ENCODE measurements at regions of chr6 and their contacts with region 1.

Region 1: DNA sequence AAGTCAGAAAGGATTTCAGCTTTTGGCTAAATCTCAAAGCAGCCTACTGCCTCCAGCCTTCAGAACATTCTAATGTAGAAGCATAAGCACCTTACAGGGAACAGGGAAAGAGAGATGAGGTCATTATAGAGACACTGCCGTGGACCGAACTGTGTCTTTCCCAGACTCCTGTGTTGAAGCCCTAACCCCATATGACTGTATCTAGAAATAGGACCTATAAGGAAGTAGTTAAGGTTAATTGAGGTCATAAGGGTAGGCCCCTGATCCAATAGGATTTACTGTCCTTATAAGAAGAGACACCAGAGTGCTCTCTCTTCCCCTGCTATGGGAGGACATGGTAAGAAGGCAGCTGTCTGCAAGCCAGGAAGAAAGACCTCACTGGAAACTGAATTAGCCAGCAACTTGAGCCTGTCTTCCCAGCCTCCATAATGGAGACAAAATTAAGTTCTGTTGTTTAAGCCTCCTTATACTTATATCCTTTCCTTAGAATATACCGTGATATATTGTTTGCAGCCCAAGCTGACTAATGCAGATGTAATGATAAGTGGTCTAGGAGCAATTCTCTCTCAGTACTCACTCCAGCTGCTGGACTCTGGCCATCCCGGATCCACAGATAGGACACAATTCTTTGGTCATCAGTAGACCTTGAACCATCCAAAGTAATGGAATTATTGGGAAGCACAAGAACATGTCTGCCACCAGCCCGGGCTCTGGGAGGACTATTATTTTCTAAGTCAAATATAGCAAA is 71.4 kb downstream of the ALDH5A1 start:
- DNase-seq: no peak
- ATAC-seq: no peak
- H3K4me3 ChIP-seq: no peak overlapping the region
- H3K4me3 Mint-ChIP-seq: no peak overlapping the region
- H3K27ac ChIP-seq: no peak overlapping the region
- H3K27ac Mint-ChIP-seq: no peak overlapping the region
- H3K4me1 ChIP-seq: no peaks in the 10 kb centered on the region
- H3K4me1 Mint-ChIP-seq: peaks cover 0 to 5% (median 0%) of the 10 kb centered on the region in 3 donors
- H3K27me3 ChIP-seq: peaks cover 0 to 10% of the 10 kb centered on the region in 2 experiments
- H3K27me3 Mint-ChIP-seq: peaks cover 0 to 4% of the 10 kb centered on the region in 2 donors

Region 2: DNA sequence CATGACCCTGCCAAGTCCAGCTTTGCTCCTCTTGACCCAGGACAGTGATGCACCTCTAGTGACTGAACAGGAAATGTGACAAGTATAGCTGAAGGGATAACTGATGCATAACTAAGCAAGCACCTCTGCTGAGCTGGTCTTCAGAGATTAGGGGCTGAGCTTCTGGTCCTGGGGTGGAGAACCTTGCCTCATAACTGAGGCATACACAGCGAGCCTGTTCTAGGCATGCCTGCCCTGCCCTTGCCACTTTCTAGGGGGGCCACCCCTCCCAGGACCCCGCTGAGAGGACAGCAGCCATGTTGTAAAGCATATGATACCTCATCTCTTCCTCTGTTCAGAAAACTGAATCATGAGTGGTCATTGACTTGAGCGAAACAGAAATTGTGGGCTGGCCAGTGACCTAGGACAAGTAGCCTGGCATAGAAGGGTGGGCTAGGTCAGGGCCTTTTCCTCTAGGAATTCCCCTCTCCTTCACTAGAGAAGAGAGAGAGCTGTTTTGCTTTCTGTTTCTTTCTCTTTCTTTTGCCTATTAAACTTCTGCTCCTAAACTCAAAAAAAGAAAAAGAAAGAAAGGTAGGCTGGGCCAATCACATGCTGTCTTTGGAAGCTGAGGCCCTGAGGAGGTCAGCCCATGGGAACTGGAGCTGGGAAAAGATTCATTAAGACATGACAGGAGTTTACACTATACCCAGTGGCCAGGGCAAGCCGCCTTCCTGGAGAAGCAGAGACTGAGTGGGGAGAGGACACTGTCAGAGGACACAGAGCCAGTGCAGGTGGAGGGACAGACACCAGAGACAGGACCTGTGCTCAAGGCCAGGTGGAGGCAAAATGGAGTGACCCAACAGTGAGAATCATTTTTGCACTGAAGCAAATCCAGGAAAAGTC is 48.3 kb before region 1 on chr6:
- CTCF ChIA-PET with region 1: interaction called in 1 of 2 experiments, 10 read pairs
- POLR2A ChIA-PET with region 1: no interaction called
- DNase-seq: no peak
- ATAC-seq: no peak
- H3K4me3 ChIP-seq: no peak overlapping the region
- H3K4me3 Mint-ChIP-seq: no peak overlapping the region
- H3K27ac ChIP-seq: no peak overlapping the region
- H3K27ac Mint-ChIP-seq: peak overlapping the region; percentile 24 to 68
- H3K4me1 ChIP-seq: no peaks in the 10 kb centered on the region
- H3K4me1 Mint-ChIP-seq: peaks cover 0 to 8% (median 1%) of the 10 kb centered on the region in 3 donors
- H3K27me3 ChIP-seq: no peaks in the 10 kb centered on the region
- H3K27me3 Mint-ChIP-seq: no peaks in the 10 kb centered on the region

Region 3: GRCh38 chr6:24549674-24550353 is 16.4 kb before region 1 on chr6:
- CTCF ChIA-PET with region 1: no interaction called
- POLR2A ChIA-PET with region 1: no interaction called
- DNase-seq: no peak
- ATAC-seq: no peak
- H3K4me3 ChIP-seq: no peak overlapping the region
- H3K4me3 Mint-ChIP-seq: no peak overlapping the region
- H3K27ac ChIP-seq: no peak overlapping the region
- H3K27ac Mint-ChIP-seq: no peak overlapping the region
- H3K4me1 ChIP-seq: peaks cover 3 to 5% of the 10 kb centered on the region in 2 experiments
- H3K4me1 Mint-ChIP-seq: peaks cover 9 to 10% (median 10%) of the 10 kb centered on the region in 3 donors
- H3K27me3 ChIP-seq: peaks cover 0 to 7% of the 10 kb centered on the region in 2 experiments
- H3K27me3 Mint-ChIP-seq: peaks cover 10 to 25% of the 10 kb centered on the region in 2 donors

Region 4: DNA sequence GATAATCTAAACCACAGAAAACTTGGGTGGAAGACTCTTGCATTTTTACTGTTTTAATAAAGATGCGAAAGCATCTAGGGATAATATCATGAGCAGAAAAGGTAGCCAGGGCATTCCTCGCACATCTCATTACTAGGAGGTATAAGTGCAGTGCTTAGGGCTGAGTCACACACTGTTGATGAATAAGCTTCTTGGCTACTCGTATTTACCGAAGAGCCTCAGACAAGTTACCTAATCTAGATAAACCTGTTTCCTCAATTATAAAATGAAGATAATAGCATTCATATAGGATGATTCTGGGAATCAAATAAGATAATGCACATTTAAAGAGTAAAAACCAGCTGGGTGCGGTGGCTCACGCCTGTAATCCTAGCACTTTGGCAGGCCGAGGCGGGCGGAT is 80.6 kb after region 1 on chr6:
- CTCF ChIA-PET with region 1: no interaction called
- POLR2A ChIA-PET with region 1: no interaction called
- DNase-seq: no peak
- ATAC-seq: no peak
- H3K4me3 ChIP-seq: no peak overlapping the region
- H3K4me3 Mint-ChIP-seq: peak overlapping the region; percentile 80 to 89 (median 80)
- H3K27ac ChIP-seq: no peak overlapping the region
- H3K27ac Mint-ChIP-seq: no peak overlapping the region
- H3K4me1 ChIP-seq: peaks cover 7 to 10% of the 10 kb centered on the region in 2 experiments
- H3K4me1 Mint-ChIP-seq: peaks cover 12 to 17% (median 13%) of the 10 kb centered on the region in 3 donors
- H3K27me3 ChIP-seq: peaks cover 3 to 15% of the 10 kb centered on the region in 2 experiments
- H3K27me3 Mint-ChIP-seq: peaks cover 1 to 24% of the 10 kb centered on the region in 2 donors

Region 5: GRCh38 chr6:24788048-24788665 is 222.0 kb after region 1 on chr6:
- CTCF ChIA-PET with region 1: no interaction called
- POLR2A ChIA-PET with region 1: interaction called in 1 of 2 experiments, 13 read pairs
- DNase-seq: no peak
- ATAC-seq: no peak
- H3K4me3 ChIP-seq: no peak overlapping the region
- H3K4me3 Mint-ChIP-seq: no peak overlapping the region
- H3K27ac ChIP-seq: no peak overlapping the region
- H3K27ac Mint-ChIP-seq: no peak overlapping the region
- H3K4me1 ChIP-seq: no peaks in the 10 kb centered on the region
- H3K4me1 Mint-ChIP-seq: no peaks in the 10 kb centered on the region
- H3K27me3 ChIP-seq: no peaks in the 10 kb centered on the region
- H3K27me3 Mint-ChIP-seq: no peaks in the 10 kb centered on the region